Activated T-helper 2 cell treated with anti-CD3 and anti-CD28 coated beads, Interferon-gamma antibody, Interleukin-2, Interleukin-4, amounts not matched to agents 10 μg/mL and 5 μg/mL and 100 μg/mL, durations not matched to agents 14 hours and 24 hours and 36 hours (primary cell): ENCODE measurements at regions of chr12 and their contacts with region 1.

Region 1: DNA sequence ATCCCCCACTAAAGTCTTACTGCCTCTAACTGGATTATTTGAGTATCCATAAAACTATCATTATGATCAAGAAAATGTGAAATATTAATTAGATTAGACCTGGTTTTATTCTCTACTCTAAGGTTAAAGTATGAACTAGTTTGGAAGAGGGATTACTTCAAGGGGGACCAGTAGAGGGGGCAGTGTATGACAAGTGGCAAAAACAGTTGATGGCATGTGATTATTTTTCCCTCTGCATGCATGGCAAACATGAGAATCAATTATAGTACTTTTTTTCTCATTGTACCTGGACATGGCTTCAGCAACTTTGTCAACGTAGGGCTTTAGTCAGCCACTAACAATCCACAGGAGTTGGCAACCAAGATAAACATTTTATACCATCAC is 145.0 kb upstream of the SLC38A2 start:
- DNase-seq: no peak
- H3K4me3 Mint-ChIP-seq: peak overlapping the region; percentile 45
- H3K27ac Mint-ChIP-seq: peak overlapping the region; percentile 93
- H3K4me1 Mint-ChIP-seq: peaks cover 77% of the 10 kb centered on the region
- H3K27me3 Mint-ChIP-seq: no peaks in the 10 kb centered on the region

Region 2: GRCh38 chr12:46382964-46383653 is 134.5 kb before region 1 on chr12:
- intact Hi-C with region 1: loop called (anchors 1 kb)
- DNase-seq: peak; percentile 95
- H3K4me3 Mint-ChIP-seq: peak overlapping the region; percentile 85
- H3K27ac Mint-ChIP-seq: peak overlapping the region; percentile 92
- H3K4me1 Mint-ChIP-seq: peaks cover 55% of the 10 kb centered on the region
- H3K27me3 Mint-ChIP-seq: no peaks in the 10 kb centered on the region

Region 3: DNA sequence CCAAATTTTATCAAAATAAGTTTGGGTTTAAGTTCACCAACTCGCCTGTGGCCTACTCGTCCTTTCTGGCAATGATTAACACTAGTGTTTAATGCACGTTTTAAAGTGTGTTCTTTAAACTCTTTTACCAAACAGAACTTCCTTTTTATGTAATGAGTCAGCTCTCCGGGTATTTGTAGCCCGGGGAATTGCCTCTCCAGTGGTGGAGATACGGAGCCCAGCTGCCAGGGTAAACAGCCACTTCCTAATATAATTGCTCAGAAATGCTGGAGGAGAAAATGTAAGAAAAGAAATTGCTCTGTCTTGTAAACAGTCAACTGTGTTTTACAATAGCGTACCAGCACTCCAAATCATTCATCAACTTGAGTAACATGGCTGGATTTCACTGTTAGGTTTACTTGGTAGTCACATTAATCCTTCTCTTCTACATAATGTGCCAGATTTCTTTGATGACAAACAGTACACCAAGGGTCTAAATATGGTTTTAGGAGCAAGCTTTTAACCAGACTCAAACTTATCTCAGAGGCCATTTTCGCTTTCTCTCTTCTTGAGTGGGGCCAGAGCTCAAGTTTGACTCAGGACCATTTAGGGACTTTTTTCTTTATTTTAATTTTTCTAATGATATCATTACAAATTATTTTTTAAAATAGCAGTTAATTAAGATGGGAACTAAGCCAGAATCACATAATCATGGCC is 43.8 kb before region 1 on chr12:
- intact Hi-C with region 1: loop called (anchors 1 kb)
- DNase-seq: no peak
- H3K4me3 Mint-ChIP-seq: peak overlapping the region; percentile 33
- H3K27ac Mint-ChIP-seq: peak overlapping the region; percentile 80
- H3K4me1 Mint-ChIP-seq: peaks cover 44% of the 10 kb centered on the region
- H3K27me3 Mint-ChIP-seq: no peaks in the 10 kb centered on the region

Region 4: DNA sequence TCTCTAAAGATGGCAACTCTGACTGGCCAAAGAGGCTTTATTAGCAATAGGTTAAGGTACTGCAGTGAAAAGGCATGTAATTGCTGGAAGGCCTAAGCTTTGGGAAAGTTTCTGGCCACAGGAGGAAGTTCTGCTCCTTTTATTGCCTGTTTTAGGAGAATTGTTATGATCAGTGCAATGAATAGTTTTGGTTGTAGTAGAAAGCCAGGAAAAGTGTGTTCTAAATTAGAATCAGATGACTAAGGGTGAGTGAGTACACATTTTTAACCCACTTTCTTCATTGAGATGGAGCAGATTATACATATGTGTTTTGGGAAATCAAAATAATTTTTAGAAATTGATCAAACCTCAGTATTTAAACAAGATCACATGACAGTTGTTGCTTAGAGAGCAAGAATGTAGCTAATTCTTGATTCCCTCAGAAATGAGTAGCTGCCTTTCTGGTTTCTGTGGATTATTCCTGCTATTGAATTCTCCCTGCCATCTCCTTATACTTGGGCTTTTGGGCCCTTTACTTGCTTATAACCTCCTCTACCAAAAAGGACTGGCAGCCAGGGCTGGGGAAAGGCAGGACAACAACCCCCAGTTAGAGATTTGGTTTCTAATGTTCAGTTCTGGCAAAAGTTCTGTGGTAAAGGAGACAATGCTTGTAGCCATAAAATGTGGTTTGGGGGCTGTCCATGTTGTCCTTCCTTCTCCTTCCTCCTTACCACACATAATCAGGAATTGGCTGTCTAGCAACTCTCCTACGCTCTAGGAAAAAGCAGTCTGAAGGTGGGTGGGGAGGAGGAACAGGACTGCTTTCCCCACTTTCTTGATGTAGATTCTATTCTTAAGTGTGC is 91.1 kb after region 1 on chr12:
- intact Hi-C with region 1: loop called (anchors 1 kb)
- DNase-seq: no peak
- H3K4me3 Mint-ChIP-seq: peak overlapping the region; percentile 37
- H3K27ac Mint-ChIP-seq: peak overlapping the region; percentile 65
- H3K4me1 Mint-ChIP-seq: peaks cover 37% of the 10 kb centered on the region
- H3K27me3 Mint-ChIP-seq: no peaks in the 10 kb centered on the region